OCI-LY7 (cell line): ENCODE measurements at regions of chr4 and their contacts with region 1.

Region 1: DNA sequence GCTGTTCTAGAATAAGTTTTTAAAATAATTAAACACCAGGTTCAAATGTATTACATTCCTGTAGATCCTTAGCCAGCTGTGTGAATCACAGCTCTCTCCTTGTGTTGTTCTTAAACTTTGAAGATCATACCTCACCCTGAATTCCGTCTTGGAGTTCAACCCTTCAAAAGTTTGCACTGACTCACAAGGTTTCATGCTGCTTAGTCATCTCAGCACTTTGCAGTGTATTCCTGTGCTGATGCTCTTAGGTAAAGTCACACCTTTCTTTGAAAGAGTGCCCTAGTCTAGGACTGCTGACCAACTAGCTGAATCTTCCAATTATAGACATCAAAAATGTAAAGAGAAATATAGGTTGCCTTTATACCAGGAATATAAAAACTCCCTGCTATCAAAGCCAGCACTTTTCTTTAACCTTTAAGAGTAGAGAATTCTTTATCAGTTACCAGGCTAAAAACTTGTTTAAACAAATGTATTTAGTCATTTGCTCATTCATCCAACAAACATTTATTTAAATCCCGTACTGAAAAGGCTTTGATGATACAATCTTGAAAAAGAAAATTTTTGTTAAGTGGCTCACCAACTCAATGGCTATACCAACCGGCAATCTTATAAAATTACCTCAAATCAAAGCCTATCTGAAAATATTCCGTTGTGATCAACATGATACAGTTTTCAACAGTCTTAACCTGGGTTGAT is 169.7 kb downstream of the RAP1GDS1 start:
- DNase-seq: no peak
- H3K4me3 ChIP-seq: no peak overlapping the region
- H3K27ac ChIP-seq: no peak overlapping the region
- H3K4me1 ChIP-seq: no peaks in the 10 kb centered on the region
- CTCF ChIP-seq: no peak

Region 2: GRCh38 chr4:97577004-97577403 is 853.9 kb before region 1 on chr4:
- CTCF ChIA-PET with region 1: no interaction called
- POLR2A ChIA-PET with region 1: no interaction called
- intact Hi-C with region 1: no loop called
- DNase-seq: no peak
- H3K4me3 ChIP-seq: no peak overlapping the region
- H3K27ac ChIP-seq: no peak overlapping the region
- H3K4me1 ChIP-seq: no peaks in the 10 kb centered on the region
- CTCF ChIP-seq: no peak

Region 3: DNA sequence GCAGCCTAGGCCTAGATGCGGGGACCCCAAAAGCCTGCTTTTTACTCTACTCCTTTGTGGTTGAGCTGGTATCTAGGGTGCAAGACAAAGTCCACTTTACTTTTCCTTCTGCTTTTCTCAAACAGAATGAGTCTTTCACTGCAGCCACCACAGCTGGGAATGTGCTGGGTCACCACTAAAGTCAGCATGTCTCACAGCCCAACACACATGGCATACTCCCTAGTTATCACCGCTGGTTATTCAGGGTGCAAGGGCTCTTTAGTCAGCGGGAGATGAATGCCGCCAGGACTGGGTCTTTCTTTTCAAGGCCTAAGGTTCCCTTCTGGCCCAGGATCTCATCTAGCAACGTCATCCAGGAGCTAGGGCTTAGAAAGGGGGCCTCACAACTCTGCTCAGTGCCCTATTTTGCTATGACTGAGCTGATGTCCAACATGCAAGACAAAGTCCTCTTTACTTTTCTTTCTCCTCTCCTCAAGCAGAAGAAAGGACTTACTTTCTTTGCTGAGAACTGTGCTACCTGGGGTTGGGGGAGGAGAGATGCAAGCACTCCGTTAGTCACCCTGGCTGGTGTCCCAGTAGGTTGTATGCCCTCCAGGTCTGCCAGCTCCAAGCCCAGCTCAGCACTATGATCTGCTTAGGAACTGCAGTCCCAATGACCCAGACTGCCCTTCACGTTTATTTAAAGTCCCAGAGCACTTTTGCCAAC is 264.7 kb before region 1 on chr4:
- CTCF ChIA-PET with region 1: no interaction called
- POLR2A ChIA-PET with region 1: no interaction called
- intact Hi-C with region 1: no loop called
- DNase-seq: no peak
- H3K4me3 ChIP-seq: no peak overlapping the region
- H3K27ac ChIP-seq: no peak overlapping the region
- H3K4me1 ChIP-seq: no peaks in the 10 kb centered on the region
- CTCF ChIP-seq: no peak

Region 4: GRCh38 chr4:98275145-98275544 is 155.7 kb before region 1 on chr4:
- CTCF ChIA-PET with region 1: no interaction called
- POLR2A ChIA-PET with region 1: no interaction called
- intact Hi-C with region 1: no loop called
- DNase-seq: no peak
- H3K4me3 ChIP-seq: no peak overlapping the region
- H3K27ac ChIP-seq: no peak overlapping the region
- H3K4me1 ChIP-seq: no peaks in the 10 kb centered on the region
- CTCF ChIP-seq: no peak

Region 5: GRCh38 chr4:98416844-98417243 is 14.0 kb before region 1 on chr4:
- CTCF ChIA-PET with region 1: no interaction called
- POLR2A ChIA-PET with region 1: interaction called, 15 read pairs
- intact Hi-C with region 1: no loop called
- DNase-seq: no peak
- H3K4me3 ChIP-seq: no peak overlapping the region
- H3K27ac ChIP-seq: no peak overlapping the region
- H3K4me1 ChIP-seq: no peaks in the 10 kb centered on the region
- CTCF ChIP-seq: no peak

Region 6: DNA sequence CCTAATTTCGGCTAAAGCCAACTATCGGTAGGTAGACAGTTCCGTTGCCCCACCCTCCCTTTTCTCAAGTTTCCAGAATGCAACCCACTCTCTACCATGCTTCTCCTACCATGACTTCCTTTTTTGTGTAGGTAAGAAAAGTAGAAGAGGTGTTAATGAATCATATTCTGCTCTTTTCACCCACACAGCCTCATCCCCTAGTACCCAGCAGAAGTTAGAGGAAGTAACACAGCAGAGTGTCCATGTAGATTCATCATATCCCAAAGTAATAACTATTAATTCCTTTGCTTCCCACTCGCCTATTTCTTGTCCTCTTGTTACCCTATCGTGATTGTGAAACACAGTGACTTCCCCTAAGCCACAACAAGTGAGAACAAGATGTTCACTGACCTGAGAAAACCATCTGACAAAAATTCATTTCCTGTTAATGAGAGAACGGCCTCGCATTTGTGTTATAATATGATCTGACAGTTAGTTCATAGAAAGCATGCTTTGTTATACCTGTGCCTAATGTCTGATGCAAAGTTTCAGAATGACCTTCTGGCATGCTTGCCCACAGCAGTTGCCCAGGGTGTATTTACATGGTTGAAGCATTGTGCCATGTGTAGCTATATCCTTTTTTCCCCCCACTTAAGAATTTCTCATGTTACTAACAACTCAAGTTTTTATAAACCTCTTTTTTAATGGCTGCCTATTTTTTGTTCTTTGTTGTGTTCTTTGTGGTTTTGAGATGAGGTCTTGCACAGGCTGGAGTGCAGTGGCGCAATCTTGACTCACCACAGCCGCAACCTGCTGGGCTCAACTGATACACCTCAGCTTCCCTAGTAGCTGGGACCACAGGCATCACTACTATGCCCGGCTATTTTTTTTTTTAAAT is 15.9 kb after region 1 on chr4:
- CTCF ChIA-PET with region 1: no interaction called
- POLR2A ChIA-PET with region 1: interaction called, 23 read pairs
- intact Hi-C with region 1: no loop called
- DNase-seq: peak; percentile 65
- H3K4me3 ChIP-seq: peak overlapping the region; percentile 0
- H3K27ac ChIP-seq: peak overlapping the region; percentile 41
- H3K4me1 ChIP-seq: peaks cover 29% of the 10 kb centered on the region
- CTCF ChIP-seq: no peak

Region 7: GRCh38 chr4:98474408-98474844 is 43.6 kb after region 1 on chr4:
- CTCF ChIA-PET with region 1: no interaction called
- POLR2A ChIA-PET with region 1: no interaction called
- intact Hi-C with region 1: no loop called
- DNase-seq: no peak
- H3K4me3 ChIP-seq: no peak overlapping the region
- H3K27ac ChIP-seq: no peak overlapping the region
- H3K4me1 ChIP-seq: no peaks in the 10 kb centered on the region
- CTCF ChIP-seq: no peak